Activated CD4-positive, alpha-beta T cell treated with anti-CD3 and anti-CD28 coated beads, Interleukin-2, amount 10 ng/mL, durations not matched to agents 24 days and 14 days (primary cell): ENCODE measurements at regions of chr17 and their contacts with region 1.

Region 1: DNA sequence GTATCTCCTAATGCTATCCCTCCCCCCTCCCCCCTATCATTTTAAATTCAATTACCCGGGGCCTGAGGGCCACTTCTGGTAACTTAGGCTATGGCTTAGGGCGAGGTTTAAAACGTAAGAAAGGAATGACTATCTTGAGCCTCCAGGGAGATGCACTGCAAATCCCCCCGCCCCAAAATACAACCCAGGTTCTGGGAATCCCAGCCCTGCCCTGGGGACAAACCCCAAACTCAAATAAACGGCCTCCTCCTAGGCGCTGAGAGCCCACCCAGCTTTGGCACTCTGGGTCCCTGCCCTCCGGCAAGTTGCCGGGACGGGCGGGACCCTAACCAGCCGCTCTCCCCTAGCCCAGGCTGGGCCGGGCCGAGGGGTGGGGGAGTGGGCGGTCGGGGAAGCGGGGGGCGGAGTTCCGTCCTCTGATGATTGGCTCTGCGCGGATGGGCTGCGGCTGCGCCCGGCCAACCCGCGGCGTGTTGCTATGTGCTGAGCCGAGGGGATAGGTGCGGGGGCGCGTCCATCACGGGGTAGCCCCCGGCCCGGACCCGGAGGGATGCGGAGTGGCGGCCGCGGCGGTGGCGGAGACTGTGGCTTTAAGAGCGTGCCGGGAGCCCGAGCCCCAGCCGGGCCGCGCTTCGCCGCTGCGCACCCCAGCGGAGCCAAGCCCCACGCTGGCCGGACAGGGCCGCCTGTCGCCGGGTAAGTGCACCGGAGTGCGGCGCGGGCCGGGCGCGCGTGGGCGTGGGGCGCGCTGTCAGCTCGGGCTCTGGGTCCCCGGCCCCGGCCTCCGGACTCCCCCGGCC is at the start of gene YPEL2:
- DNase-seq: peak; percentile 97
- H3K4me3 Mint-ChIP-seq: peak within 1 kb of the TSS; percentile 89
- H3K27ac Mint-ChIP-seq: peak within 1 kb of the TSS; percentile 79
- H3K4me1 Mint-ChIP-seq: peaks cover 57% of the 10 kb centered on the region
- H3K27me3 Mint-ChIP-seq: peaks cover 15% of the 10 kb centered on the region
- total RNA-seq, gene YPEL2: 6.2 and 7.0 TPM in 2 replicates

Region 2: DNA sequence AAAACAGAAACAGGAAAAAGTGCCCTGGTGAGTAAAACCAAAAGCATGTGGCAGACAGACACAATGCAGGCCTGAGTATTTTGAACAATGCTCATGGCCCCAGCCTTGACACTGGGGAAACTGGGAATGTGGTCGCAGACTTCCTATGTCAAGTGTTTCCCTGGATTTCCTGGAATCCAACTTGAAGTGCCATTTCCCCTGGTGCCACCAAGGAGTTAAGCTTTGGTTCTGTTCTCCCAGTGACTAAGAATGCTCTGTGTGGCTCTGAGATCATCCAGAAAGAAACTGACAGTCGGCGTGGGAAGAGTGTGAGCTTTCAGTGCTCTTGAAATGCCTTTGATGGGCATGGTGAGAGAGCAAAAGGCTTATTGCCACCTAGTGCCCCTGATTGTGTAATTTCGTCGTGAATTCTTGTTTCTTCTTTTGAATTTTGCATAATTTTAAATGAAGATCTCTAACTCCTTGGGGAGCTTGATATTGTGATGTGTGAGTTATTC is 96.1 kb after region 1 on chr17:
- intact Hi-C with region 1: loop called (anchors 1 kb)
- DNase-seq: peak; percentile 61
- H3K4me3 Mint-ChIP-seq: no peak overlapping the region
- H3K27ac Mint-ChIP-seq: peak overlapping the region; percentile 31
- H3K4me1 Mint-ChIP-seq: peaks cover 30% of the 10 kb centered on the region
- H3K27me3 Mint-ChIP-seq: peaks cover 2% of the 10 kb centered on the region

Region 3: GRCh38 chr17:59435238-59435637 is 103.9 kb after region 1 on chr17:
- intact Hi-C with region 1: loop called (anchors 1 kb)
- DNase-seq: no peak
- H3K4me3 Mint-ChIP-seq: peak overlapping the region; percentile 43
- H3K27ac Mint-ChIP-seq: peak overlapping the region; percentile 93
- H3K4me1 Mint-ChIP-seq: peaks cover 60% of the 10 kb centered on the region
- H3K27me3 Mint-ChIP-seq: peaks cover under 1% of the 10 kb centered on the region

Region 4: GRCh38 chr17:59565171-59565969 is 234.0 kb after region 1 on chr17 and contains the start of gene DHX40:
- intact Hi-C with region 1: loop called (anchors 5 kb)
- DNase-seq: peak; percentile 98
- H3K4me3 Mint-ChIP-seq: peak within 1 kb of the TSS; percentile 100
- H3K27ac Mint-ChIP-seq: peak within 1 kb of the TSS; percentile 100
- H3K4me1 Mint-ChIP-seq: peaks cover 21% of the 10 kb centered on the region
- H3K27me3 Mint-ChIP-seq: peaks cover 2% of the 10 kb centered on the region
- total RNA-seq, gene DHX40: 17.0 and 20.5 TPM in 2 replicates